Psoas muscle (tissue), 8 donors: ENCODE measurements at regions of chr22 and their contacts with region 1.

Region 1: DNA sequence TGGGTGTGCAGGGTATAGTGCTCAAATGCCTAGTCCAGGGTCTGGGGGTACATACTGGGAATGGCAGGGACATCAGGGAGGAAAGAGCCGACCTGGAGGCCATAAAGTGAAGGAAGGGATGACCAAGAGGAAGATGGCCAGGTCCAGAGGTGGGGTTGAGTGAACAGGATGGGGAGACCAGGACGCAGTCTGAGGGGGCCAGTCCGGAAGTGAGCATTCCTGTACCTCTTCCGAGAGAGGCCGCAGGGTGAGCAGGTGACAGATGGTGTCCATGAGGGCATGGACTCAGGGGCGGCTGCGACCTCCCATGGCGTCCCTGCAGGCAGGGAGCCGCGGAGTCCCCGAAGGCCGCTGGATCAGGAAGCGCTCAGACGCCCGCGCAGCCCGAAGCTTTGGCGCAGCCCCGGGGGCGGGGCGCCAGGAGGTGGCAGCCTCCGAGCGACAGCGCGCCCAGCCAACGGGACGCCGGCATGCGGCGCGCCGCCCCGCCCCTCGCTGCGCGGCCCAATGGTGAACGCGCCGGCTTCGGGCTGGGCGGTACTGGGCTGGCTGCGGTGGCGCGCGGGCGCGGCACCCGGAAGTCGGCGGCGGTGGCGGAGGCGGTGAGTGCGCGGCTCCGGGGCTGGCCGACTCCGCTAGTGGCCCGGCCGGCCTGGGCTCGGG is at the start of gene TANGO2:
- DNase-seq: peak; percentile 95 to 96
- ATAC-seq: peak; percentile 79 to 88 (median 84)
- H3K4me3 ChIP-seq: peak within 1 kb of the TSS; percentile 96
- H3K27ac ChIP-seq: peak within 1 kb of the TSS; percentile 95
- H3K4me1 ChIP-seq: peaks cover 29% of the 10 kb centered on the region
- H3K27me3 ChIP-seq: no peaks in the 10 kb centered on the region
- CTCF ChIP-seq: no peak
- total RNA-seq, gene TANGO2: 20.6 to 41.0 (median 36.4) TPM

Region 2: DNA sequence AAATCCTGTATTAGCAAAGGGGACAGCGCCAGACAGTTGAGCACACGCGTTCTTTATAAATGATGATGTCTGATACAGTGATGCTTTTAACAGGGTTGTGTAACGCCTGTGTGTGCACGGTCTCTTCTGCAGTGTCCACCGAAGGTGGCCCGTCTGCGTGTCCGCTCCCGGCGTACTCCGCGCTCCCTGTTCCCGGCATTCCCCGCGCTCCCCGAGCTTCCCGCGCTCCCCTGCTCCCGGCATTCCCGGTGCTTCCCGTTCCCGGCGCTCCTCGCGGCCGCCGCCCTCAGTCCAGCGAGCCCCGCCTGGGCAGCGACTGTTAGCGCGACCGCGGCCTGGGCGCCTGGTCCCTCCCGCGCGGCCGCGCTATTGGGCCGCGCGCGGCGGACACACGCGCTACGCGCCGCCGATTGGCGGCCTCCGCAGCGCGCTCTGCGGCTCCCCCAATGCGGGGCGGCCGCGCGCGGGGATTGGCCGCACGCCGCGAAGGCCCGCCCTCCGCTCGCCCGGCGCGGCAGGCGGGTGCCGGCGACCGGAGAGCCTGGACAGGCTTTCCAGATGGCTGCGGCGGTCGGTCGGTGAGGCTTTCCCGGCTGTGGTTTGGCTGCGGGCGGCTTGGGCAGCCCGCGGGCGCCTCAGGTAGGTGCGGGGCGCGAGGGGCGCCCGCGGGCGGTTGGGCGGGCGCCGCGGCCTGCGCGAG is 59.2 kb after region 1 on chr22 and contains the start of gene DGCR8:
- intact Hi-C with region 1: loop called in 1 of 2 experiments (anchors 5 kb)
- DNase-seq: peak; percentile 94 to 97
- ATAC-seq: peak; percentile 92 to 95 (median 93)
- H3K4me3 ChIP-seq: peak within 1 kb of the TSS; percentile 98
- H3K27ac ChIP-seq: peak within 1 kb of the TSS; percentile 88
- H3K4me1 ChIP-seq: peaks cover 40% of the 10 kb centered on the region
- H3K27me3 ChIP-seq: no peaks in the 10 kb centered on the region
- CTCF ChIP-seq: no peak
- total RNA-seq, gene DGCR8: 12.2 to 19.5 (median 15.0) TPM

Region 3: GRCh38 chr22:20116951-20117645 is 96.4 kb after region 1 on chr22 and contains the start of gene TRMT2A:
- intact Hi-C with region 1: loop called in 1 of 2 experiments (anchors 5 kb)
- DNase-seq: peak; percentile 99
- ATAC-seq: peak; percentile 91 to 93 (median 92)
- H3K4me3 ChIP-seq: peak within 1 kb of the TSS; percentile 92
- H3K27ac ChIP-seq: peak within 1 kb of the TSS; percentile 86
- H3K4me1 ChIP-seq: peaks cover 30% of the 10 kb centered on the region
- H3K27me3 ChIP-seq: no peaks in the 10 kb centered on the region
- CTCF ChIP-seq: no peak
- total RNA-seq, gene TRMT2A: 20.5 to 34.1 (median 24.9) TPM

Region 4: DNA sequence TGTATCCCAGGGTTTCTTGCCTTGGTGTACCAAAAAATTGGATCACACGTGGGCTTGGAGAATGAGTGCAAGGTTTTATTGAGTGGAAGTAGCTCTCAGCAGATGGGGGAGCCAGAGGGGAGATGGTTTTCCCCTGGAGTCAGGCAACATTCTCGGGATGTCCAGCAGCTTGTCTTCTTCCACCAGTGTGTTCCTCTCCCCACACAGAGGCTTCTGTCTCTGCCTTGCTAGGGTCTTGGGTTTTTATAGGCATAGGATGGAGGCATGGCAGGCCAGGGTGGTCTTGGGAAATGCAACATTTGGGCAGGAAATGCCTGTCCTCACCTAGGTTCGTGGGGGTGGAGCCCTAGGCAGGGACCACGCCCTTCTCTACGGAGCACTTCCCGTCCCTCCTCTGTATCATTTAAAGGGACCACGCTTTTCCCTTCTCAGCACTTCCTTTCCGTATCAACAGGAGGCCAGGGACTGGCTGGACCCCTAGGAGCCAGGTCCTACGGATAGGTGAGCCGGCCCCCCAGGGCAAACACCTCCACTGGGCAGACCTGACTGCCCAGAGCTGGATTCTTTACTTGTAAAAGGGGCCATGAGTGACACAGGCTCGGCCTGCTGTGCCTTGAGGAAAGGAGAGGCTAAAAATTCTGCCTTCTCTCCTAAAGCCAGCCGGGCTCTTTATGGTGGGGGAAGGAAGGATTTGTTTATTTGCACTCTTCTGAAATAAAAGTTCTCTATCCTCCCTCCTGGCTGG is 185.5 kb after region 1 on chr22:
- intact Hi-C with region 1: no loop called
- DNase-seq: peak; percentile 61 to 74
- ATAC-seq: peak in 2 of 4 donors; percentile 57 to 62
- H3K4me3 ChIP-seq: peak overlapping the region; percentile 67
- H3K27ac ChIP-seq: peak overlapping the region; percentile 63
- H3K4me1 ChIP-seq: peaks cover 5% of the 10 kb centered on the region
- H3K27me3 ChIP-seq: peaks cover 0 to 8% (median 3%) of the 10 kb centered on the region in 3 donors
- CTCF ChIP-seq: no peak